Posterior vena cava (tissue), 2 donors: ENCODE measurements at regions of chr16 and their contacts with region 1.

Region 1: GRCh38 chr16:57906382-57907316 is 64.3 kb downstream of the CNGB1 start:
- DNase-seq: no peak

Region 2: DNA sequence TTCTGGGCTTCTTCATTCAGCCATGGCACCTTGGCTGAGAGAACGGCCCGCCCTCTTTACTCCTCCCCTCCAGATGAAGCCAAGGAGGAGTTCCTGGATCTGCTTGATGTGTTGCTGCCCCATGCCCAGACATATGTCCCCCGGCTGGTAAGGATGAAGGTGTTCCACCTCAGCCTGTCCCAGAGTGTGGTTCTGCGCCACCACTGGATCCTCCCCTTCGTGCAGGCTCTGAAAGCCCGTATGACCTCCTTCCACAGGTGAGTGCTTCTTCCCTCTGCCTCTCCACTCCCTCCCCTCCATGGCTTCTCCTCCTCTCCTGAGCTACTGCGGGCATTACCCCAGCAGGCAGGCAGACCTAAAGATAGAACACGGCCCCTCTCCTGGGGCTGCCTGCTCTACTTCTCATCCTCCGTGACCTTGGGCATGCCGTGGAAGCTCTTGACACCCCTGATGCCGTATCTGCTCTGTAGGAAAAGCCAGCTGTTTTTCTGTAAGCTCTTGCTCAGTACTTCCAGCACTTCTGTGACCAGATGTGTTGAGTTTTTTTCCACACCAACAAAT is 103.3 kb after region 1 on chr16:
- intact Hi-C with region 1: loop called in 1 of 2 experiments (anchors 2 kb)
- DNase-seq: no peak